ENCODE measurements at regions of chr20 and their contacts with region 1.

Region 1: DNA sequence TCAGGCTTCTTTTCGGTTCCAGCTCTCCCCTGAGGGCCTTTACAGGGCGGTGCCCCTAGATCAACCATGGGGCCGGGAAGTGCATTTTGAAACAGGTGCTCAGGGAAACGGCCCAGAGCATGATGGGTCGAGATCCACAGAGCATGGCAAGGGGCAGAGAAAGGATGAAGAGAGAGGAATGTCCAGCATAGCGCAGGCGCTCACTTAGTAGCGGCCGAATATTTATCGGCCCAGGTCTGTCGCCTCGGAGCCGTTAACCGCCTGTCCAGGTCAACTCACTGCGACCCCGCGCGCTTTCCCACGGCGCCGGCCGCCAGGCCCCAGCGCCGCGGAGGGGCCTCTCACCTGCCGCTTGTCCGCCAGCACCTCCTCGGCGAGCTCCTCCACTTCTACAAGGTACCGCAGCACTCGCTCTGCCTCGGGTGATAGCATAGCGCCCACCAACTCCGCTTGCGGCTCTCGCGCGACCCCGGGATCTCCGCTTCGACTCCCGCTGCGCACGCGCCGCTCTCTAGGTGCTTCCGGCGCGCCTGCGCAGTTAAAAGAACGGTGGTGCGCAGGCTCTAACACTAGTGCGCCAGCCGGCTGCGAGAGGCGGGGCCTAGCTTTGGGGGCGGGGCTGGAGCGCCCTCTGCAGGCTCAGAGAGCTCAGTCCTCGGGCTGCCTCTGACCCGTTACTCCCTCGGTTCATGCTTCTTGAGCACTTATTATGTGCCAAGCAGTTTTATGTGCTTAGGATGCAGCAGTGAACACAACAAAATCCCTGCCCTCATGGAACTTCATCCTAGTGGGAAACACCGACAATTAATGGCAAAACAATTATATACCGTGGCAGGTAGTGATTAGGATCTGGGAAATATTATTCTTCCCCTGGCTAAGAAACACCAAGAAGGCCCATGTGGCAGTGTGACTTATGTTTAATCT is at the start of gene PDRG1:
- H3K4me3 ChIP-seq: peak within 1 kb of the TSS; percentile 87
- H3K27ac ChIP-seq: peak within 1 kb of the TSS; percentile 60
- H3K4me1 ChIP-seq: no peaks in the 10 kb centered on the region
- CTCF ChIP-seq: peak; percentile 94

Region 2: GRCh38 chr20:31822421-31823330 is 129.1 kb before region 1 on chr20:
- CTCF ChIA-PET with region 1: interaction called, 46 read pairs
- POLR2A ChIA-PET with region 1: interaction called, 5 read pairs
- H3K4me3 ChIP-seq: no peak overlapping the region
- H3K27ac ChIP-seq: no peak overlapping the region
- H3K4me1 ChIP-seq: no peaks in the 10 kb centered on the region
- CTCF ChIP-seq: peak; percentile 94

Region 3: DNA sequence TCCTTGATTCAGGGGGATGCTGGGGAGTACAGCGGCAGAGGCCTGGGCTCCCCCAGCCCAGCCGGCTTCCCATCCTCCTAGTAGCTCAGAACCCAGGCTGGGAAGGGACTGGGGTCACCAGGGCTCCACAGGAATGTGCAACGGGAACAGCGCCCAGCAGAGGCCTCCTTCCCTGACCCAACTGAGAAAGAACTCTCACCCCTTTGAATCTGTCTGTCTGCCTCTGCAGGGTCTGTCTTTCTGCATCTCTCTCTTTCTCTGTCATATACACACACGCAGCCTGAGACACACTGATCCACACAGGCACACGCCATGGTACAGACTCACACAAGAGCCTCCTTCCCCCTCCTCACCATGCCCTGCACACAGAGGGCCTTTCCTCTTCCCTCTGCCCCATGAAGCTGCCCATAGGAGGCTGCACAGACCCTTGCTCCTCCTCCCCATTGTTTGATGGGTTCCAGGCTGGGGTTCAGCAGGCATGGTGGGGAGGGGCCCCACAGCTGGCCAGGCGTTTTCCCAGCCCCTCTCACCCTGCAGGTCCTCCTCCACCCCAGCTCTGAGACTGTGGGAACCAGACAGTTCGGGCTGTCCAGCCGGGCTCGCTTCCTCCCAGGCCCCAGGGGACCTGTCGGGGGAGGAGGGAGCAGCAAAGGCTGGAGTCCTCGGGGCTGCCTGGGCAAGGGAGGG is 109.2 kb before region 1 on chr20:
- CTCF ChIA-PET with region 1: interaction called, 20 read pairs
- POLR2A ChIA-PET with region 1: no interaction called
- H3K4me3 ChIP-seq: no peak overlapping the region
- H3K27ac ChIP-seq: no peak overlapping the region
- H3K4me1 ChIP-seq: no peaks in the 10 kb centered on the region
- CTCF ChIP-seq: no peak

Region 4: DNA sequence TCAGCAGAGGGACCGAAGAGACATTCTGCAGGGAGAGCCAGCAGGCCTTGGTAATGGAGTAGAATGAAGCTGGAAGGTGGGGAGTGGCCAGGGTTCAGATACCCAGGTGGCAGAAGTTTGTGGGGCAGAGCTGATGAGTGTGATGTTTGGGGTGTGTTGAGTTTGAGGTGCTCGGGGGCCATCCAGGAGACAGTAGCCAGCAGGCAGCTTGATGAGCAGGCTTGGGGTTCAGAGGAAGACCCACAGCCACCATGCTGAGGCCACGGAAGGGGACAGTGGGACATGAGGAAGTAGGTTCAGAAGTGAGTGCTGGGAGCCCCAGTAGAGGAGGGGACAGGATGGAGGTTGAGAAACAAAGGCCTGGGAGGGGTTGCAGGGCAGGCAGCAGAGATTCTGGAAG is 95.3 kb before region 1 on chr20:
- CTCF ChIA-PET with region 1: interaction called, 83 read pairs
- POLR2A ChIA-PET with region 1: interaction called, 9 read pairs
- H3K4me3 ChIP-seq: no peak overlapping the region
- H3K27ac ChIP-seq: no peak overlapping the region
- H3K4me1 ChIP-seq: no peaks in the 10 kb centered on the region
- CTCF ChIP-seq: no peak

Region 5: GRCh38 chr20:31924561-31924960 is 27.2 kb before region 1 on chr20:
- CTCF ChIA-PET with region 1: no interaction called
- POLR2A ChIA-PET with region 1: interaction called, 10 read pairs
- H3K4me3 ChIP-seq: no peak overlapping the region
- H3K27ac ChIP-seq: no peak overlapping the region
- H3K4me1 ChIP-seq: no peaks in the 10 kb centered on the region
- CTCF ChIP-seq: no peak

Region 6: DNA sequence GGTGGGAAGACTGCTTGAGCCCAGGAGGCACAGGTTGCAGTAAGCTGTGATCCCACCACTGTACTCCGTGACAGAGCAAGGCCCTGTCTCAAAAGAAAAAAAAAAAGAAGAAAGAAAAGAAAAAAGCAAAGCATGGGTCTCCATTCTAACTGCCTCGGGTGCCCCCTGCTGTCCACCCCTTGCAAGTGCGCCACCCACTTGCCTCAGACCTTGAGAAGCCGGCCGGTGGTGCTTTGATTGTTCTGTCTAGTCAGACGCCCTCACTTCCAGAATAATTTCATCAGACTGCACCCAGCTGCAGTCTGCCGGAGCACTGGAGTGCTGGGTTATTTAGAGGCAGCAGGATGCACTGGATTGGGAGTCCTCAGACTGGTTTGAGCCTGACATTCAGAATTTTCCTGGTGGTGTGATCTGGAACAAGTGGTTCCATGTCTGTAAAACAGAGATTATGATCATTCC is 140.1 kb after region 1 on chr20:
- CTCF ChIA-PET with region 1: interaction called, 10 read pairs
- POLR2A ChIA-PET with region 1: no interaction called
- H3K4me3 ChIP-seq: no peak overlapping the region
- H3K27ac ChIP-seq: no peak overlapping the region
- H3K4me1 ChIP-seq: no peaks in the 10 kb centered on the region
- CTCF ChIP-seq: peak; percentile 89

Measured in HEK293 (cell line).